Ovary (tissue), 10 donors: ENCODE measurements at regions of chr20 and their contacts with region 1.

Region 1: DNA sequence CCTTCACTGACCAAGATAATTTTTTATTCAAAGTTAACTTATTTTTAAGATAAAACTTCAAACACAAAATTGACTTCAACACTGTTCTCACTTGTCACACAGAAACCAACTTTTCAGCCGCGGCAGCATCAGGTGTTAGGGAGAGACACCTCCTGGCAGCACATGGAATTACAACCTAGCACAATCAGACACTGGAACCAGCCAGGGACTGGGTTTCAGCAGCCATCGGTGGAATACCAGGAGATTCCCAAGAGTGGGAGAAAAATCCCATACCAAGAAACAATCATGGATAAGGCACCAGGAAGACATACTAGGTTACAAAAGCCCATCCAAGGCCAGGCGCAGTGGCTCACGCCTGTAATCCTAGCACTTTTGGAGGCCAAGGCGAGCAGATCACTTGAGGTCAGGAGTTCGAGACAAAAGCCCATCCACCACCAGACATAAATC is 70.0 kb downstream of the SNX5 start:
- DNase-seq: peak; percentile 65 to 82 (median 71)
- H3K4me3 ChIP-seq: no peak overlapping the region
- H3K27ac ChIP-seq: no peak overlapping the region
- H3K4me1 ChIP-seq: peaks cover 2% of the 10 kb centered on the region
- H3K27me3 ChIP-seq: no peaks in the 10 kb centered on the region
- CTCF ChIP-seq: peak; percentile 75 to 91 (median 88)
- EP300 ChIP-seq: no peak
- POLR2A ChIP-seq: no peak

Region 2: GRCh38 chr20:17504898-17505635 is 393.5 kb before region 1 on chr20:
- intact Hi-C with region 1: loop called in 3 of 4 experiments (anchors 5 to 10 kb)
- DNase-seq: peak; percentile 46 to 75 (median 58)
- H3K4me3 ChIP-seq: peak overlapping the region; percentile 42
- H3K27ac ChIP-seq: peak overlapping the region in 1 of 2 donors; percentile 6
- H3K4me1 ChIP-seq: peaks cover 2% of the 10 kb centered on the region
- H3K27me3 ChIP-seq: no peaks in the 10 kb centered on the region
- CTCF ChIP-seq: peak; percentile 54 to 73 (median 71)
- EP300 ChIP-seq: no peak
- POLR2A ChIP-seq: no peak

Region 3: DNA sequence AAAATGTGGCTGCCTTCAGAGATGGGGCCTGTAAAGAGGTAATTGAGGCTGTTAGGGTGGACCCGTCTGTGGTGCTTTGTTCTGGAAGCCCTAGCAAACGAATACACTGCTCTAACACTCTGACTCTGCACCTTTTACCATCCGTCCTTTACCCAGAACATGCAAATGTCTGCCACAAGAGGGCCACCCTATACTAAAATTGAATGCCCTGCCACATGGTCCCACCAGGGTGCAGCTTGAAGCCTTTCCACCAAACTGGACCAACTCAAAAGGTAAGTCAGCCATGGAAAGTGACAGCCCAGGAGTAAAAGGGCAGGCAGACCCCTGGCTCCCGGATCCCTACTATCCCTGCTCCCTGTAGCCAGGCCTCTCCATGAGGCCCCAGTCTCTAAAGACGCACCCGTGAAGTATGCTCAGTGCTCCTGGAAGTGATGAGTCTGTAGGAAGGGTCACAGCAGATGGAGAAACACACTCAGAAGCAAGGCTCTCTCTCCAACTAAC is 361.6 kb before region 1 on chr20:
- intact Hi-C with region 1: loop called (anchors 5 to 10 kb)
- DNase-seq: peak; percentile 65 to 82 (median 74)
- H3K4me3 ChIP-seq: no peak overlapping the region
- H3K27ac ChIP-seq: no peak overlapping the region
- H3K4me1 ChIP-seq: no peaks in the 10 kb centered on the region
- H3K27me3 ChIP-seq: no peaks in the 10 kb centered on the region
- CTCF ChIP-seq: peak; percentile 90 to 99 (median 97)
- EP300 ChIP-seq: no peak
- POLR2A ChIP-seq: peak; percentile 14

Region 4: GRCh38 chr20:17682103-17682888 is 216.3 kb before region 1 on chr20 and contains the start of gene RRBP1:
- intact Hi-C with region 1: loop called (anchors 1 to 5 kb)
- DNase-seq: peak; percentile 98
- H3K4me3 ChIP-seq: peak within 1 kb of the TSS; percentile 66
- H3K27ac ChIP-seq: peak within 1 kb of the TSS; percentile 35 to 84
- H3K4me1 ChIP-seq: no peaks in the 10 kb centered on the region
- H3K27me3 ChIP-seq: no peaks in the 10 kb centered on the region
- CTCF ChIP-seq: peak in 2 of 3 donors; percentile 46 to 74
- EP300 ChIP-seq: no peak
- POLR2A ChIP-seq: peak; percentile 86
- total RNA-seq, gene RRBP1: 29.2 to 159 (median 96.2) TPM

Region 5: DNA sequence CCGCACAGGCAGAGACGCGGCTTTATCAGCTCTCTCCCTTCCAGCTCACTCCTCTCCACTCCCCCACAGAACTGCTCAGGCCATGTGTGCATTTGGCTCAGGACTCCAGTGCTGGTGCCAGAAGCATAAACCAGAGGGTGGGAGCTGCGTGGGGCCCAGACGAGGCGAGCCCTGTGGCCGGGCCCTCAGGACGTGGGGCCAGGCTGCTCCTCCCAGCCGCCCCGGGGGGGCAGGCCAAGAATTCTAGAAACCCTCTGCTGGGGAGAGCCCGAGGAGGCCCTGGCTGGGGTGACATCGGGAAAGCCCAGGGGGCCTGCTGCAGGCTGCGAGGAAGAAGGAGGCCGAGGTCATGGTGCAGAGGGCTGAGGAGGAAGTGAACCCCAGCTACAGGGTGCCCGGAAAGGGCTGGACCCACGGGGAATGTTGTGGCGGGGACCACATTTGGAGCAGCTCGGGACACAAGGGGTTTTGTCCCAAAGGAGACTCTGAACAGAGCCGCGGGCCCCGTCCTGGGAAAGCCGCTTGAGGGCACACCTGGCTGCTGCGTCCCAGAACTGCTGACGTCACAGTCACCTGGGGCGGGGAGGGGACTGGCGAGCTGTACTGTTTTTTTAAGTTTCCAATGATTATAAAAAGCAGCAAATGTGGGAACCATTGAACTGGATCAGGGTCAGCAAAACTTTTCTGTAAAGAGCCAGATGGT is 91.7 kb before region 1 on chr20:
- intact Hi-C with region 1: loop called in 1 of 4 experiments (anchors 10 kb)
- DNase-seq: peak; percentile 91 to 95 (median 92)
- H3K4me3 ChIP-seq: no peak overlapping the region
- H3K27ac ChIP-seq: peak overlapping the region; percentile 70 to 92
- H3K4me1 ChIP-seq: peaks cover 15% of the 10 kb centered on the region
- H3K27me3 ChIP-seq: no peaks in the 10 kb centered on the region
- CTCF ChIP-seq: no peak
- EP300 ChIP-seq: no peak
- POLR2A ChIP-seq: peak; percentile 6

Region 6: GRCh38 chr20:17938871-17939619 is 40.5 kb after region 1 on chr20:
- intact Hi-C with region 1: loop called in 1 of 4 experiments (anchors 5 kb)
- DNase-seq: peak; percentile 62 to 79 (median 73)
- H3K4me3 ChIP-seq: no peak overlapping the region
- H3K27ac ChIP-seq: no peak overlapping the region
- H3K4me1 ChIP-seq: peaks cover 20% of the 10 kb centered on the region
- H3K27me3 ChIP-seq: no peaks in the 10 kb centered on the region
- CTCF ChIP-seq: peak; percentile 76 to 83 (median 82)
- EP300 ChIP-seq: no peak
- POLR2A ChIP-seq: no peak